ENCODE measurements at regions of chr4 and their contacts with region 1.

Region 1: DNA sequence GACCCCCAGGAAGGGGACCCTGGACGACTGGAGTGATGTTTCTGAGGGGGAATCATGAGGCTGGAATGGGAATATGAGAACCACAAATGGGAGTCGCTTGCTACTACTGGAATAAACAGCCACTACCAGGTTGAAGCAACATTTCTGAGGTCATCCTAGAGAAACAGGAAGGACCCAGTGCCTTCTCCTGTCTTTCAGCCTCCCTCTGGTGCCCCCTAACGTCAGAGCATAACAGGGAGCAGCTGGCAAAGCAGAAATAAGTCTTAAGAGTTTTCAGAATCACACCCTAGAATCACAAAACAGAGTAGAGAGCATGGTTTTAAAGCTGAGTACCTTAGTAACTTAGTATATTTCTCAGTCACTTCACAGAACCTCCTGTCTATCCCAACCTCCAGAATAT is 347.8 kb upstream of the PITX2 start:
- DNase-seq: peak; percentile 79 to 85
- H3K4me3 ChIP-seq: no peak overlapping the region
- H3K4me3 Mint-ChIP-seq: no peak overlapping the region
- H3K27ac Mint-ChIP-seq: no peak overlapping the region
- H3K4me1 ChIP-seq: 0 out of 2 replicates have a peak, but pooled peaks cover 3% of the 10 kb centered on the region
- H3K4me1 Mint-ChIP-seq: no peaks in the 10 kb centered on the region
- H3K27me3 ChIP-seq: no peaks in the 10 kb centered on the region
- H3K27me3 Mint-ChIP-seq: no peaks in the 10 kb centered on the region
- CTCF ChIP-seq: peak; percentile 76 to 85

Region 2: DNA sequence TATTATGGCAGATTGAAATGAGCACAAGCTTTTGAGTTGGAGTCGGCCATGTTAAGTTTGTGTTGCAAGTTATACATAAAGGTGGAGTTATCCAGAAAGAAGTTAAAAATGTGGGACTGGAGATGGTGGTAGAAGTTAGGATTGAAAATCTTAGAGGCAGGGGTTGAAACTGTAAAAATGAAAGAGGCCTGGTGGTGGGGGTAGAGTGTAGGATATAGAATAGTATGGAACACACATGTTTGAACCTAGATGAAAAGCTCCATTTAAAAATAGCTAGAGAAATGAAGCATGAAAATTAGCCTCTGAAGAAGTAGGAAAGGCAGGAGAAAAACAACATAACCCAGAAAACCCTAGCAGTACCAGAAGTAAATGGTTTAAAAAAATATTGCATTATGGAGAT is 626.5 kb before region 1 on chr4:
- CTCF ChIA-PET with region 1: no interaction called
- POLR2A ChIA-PET with region 1: no interaction called
- intact Hi-C with region 1: loop called (anchors 5 kb)
- DNase-seq: peak in 1 of 2 experiments; percentile 50
- H3K4me3 ChIP-seq: no peak overlapping the region
- H3K4me3 Mint-ChIP-seq: no peak overlapping the region
- H3K27ac Mint-ChIP-seq: no peak overlapping the region
- H3K4me1 ChIP-seq: no peaks in the 10 kb centered on the region
- H3K4me1 Mint-ChIP-seq: no peaks in the 10 kb centered on the region
- H3K27me3 ChIP-seq: no peaks in the 10 kb centered on the region
- H3K27me3 Mint-ChIP-seq: peaks cover 10% of the 10 kb centered on the region
- CTCF ChIP-seq: peak; percentile 56

Region 3: DNA sequence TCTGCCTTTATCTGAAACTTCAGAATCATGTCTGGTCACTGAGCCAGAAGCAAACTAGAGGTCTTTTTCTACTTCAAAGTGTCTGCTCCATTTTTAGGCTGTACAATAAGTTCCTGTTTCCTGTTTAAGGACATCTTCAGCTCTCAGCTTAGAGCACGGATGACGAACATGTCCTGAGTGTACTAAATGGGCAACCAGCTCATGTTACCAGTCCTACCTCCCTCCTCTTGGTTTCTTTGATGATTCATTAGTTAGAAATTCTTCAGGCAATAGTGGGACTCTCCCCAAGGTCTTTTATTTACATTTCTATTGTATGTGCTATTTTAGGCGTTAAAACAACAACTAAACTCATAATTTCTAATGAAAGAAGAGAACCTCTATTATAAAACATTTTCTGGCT is 436.7 kb before region 1 on chr4:
- CTCF ChIA-PET with region 1: no interaction called
- POLR2A ChIA-PET with region 1: no interaction called
- intact Hi-C with region 1: loop called (anchors 5 kb)
- DNase-seq: peak; percentile 6 to 33
- H3K4me3 ChIP-seq: no peak overlapping the region
- H3K4me3 Mint-ChIP-seq: no peak overlapping the region
- H3K27ac Mint-ChIP-seq: no peak overlapping the region
- H3K4me1 ChIP-seq: peaks cover 7% of the 10 kb centered on the region
- H3K4me1 Mint-ChIP-seq: peaks cover 11% of the 10 kb centered on the region
- H3K27me3 ChIP-seq: no peaks in the 10 kb centered on the region
- H3K27me3 Mint-ChIP-seq: no peaks in the 10 kb centered on the region
- CTCF ChIP-seq: no peak

Region 4: GRCh38 chr4:110622841-110623717 is 347.6 kb before region 1 on chr4 and contains the start of gene PITX2:
- CTCF ChIA-PET with region 1: interaction called, 3 read pairs
- POLR2A ChIA-PET with region 1: no interaction called
- intact Hi-C with region 1: loop called (anchors 1 kb)
- DNase-seq: peak; percentile 99
- H3K4me3 ChIP-seq: peak within 1 kb of the TSS; percentile 58
- H3K4me3 Mint-ChIP-seq: peak within 1 kb of the TSS; percentile 92
- H3K27ac Mint-ChIP-seq: peak within 1 kb of the TSS; percentile 86
- H3K4me1 ChIP-seq: peaks cover 44% of the 10 kb centered on the region
- H3K4me1 Mint-ChIP-seq: peaks cover 47% of the 10 kb centered on the region
- H3K27me3 ChIP-seq: no peaks in the 10 kb centered on the region
- H3K27me3 Mint-ChIP-seq: no peaks in the 10 kb centered on the region
- CTCF ChIP-seq: no peak
- total RNA-seq, gene PITX2: 76.8 and 82.8 TPM in 2 replicates

Region 5: DNA sequence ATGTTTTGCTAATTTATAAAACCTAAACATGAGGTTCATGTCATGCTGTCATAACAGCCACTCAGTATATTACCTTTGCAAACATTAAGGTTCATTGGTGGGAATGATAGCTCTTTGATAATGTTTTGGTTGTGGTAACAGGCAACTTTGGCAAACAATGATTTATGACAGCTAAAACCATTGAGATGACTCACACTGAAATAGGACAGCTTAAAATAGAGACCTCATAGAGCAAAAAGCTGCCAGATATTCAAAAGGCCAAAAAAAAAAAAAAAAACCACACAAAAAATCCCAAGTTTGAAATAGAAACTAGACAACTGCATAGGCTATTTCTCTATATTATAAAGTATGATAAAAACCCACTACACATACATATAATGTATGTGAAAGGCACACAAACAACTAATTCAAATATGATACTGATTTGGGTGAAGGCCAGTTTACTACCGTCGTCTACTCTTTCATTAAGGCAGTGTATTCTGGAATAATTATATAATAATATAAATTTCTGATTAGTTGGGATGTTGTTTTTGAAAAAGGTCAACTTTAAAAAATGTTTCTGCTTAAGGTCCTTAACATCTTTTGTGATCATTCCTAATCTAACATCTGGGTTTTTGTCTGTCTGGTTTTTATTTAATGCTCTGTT is 298.2 kb after region 1 on chr4:
- CTCF ChIA-PET with region 1: no interaction called
- POLR2A ChIA-PET with region 1: no interaction called
- intact Hi-C with region 1: loop called (anchors 10 kb)
- DNase-seq: no peak
- H3K4me3 ChIP-seq: no peak overlapping the region
- H3K4me3 Mint-ChIP-seq: peak overlapping the region; percentile 63
- H3K27ac Mint-ChIP-seq: peak overlapping the region; percentile 90
- H3K4me1 ChIP-seq: peaks cover 20% of the 10 kb centered on the region
- H3K4me1 Mint-ChIP-seq: peaks cover 31% of the 10 kb centered on the region
- H3K27me3 ChIP-seq: no peaks in the 10 kb centered on the region
- H3K27me3 Mint-ChIP-seq: no peaks in the 10 kb centered on the region
- CTCF ChIP-seq: no peak